ENCODE measurements at regions of chr17 and their contacts with region 1.

Region 1: GRCh38 chr17:67376737-67377487 is at the start of gene PITPNC1:
- DNase-seq: peak; percentile 77
- ATAC-seq: peak; percentile 74
- H3K4me3 Mint-ChIP-seq: peak within 1 kb of the TSS; percentile 87
- H3K27ac Mint-ChIP-seq: peak within 1 kb of the TSS; percentile 71
- H3K4me1 Mint-ChIP-seq: peaks cover 26% of the 10 kb centered on the region
- H3K27me3 Mint-ChIP-seq: no peaks in the 10 kb centered on the region
- CTCF ChIP-seq: no peak
- total RNA-seq, gene PITPNC1: 15.2 and 19.3 TPM in 2 replicates

Region 2: DNA sequence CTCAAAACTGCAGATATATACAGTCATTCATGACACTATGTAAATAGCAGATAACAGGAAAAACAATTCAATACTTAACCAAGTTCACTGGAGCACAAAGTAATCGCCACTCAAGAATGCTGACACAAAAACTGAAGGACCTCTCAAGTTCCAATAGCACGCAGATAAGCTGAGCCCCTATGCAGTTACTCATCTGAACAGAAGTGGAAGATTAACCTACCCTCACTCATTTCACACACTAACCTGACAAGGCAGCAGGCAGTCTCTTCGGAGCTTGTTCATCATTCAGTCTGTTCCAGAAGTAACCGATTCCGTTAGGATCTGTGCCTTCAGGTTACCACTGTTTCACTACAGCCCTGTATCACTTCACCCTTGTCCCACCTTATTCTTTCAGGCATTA is 137.9 kb before region 1 on chr17:
- CTCF ChIA-PET with region 1: no interaction called
- POLR2A ChIA-PET with region 1: no interaction called
- intact Hi-C with region 1: no loop called
- DNase-seq: no peak
- ATAC-seq: no peak
- H3K4me3 Mint-ChIP-seq: no peak overlapping the region
- H3K27ac Mint-ChIP-seq: no peak overlapping the region
- H3K4me1 Mint-ChIP-seq: peaks cover 32% of the 10 kb centered on the region
- H3K27me3 Mint-ChIP-seq: no peaks in the 10 kb centered on the region
- CTCF ChIP-seq: no peak

Region 3: DNA sequence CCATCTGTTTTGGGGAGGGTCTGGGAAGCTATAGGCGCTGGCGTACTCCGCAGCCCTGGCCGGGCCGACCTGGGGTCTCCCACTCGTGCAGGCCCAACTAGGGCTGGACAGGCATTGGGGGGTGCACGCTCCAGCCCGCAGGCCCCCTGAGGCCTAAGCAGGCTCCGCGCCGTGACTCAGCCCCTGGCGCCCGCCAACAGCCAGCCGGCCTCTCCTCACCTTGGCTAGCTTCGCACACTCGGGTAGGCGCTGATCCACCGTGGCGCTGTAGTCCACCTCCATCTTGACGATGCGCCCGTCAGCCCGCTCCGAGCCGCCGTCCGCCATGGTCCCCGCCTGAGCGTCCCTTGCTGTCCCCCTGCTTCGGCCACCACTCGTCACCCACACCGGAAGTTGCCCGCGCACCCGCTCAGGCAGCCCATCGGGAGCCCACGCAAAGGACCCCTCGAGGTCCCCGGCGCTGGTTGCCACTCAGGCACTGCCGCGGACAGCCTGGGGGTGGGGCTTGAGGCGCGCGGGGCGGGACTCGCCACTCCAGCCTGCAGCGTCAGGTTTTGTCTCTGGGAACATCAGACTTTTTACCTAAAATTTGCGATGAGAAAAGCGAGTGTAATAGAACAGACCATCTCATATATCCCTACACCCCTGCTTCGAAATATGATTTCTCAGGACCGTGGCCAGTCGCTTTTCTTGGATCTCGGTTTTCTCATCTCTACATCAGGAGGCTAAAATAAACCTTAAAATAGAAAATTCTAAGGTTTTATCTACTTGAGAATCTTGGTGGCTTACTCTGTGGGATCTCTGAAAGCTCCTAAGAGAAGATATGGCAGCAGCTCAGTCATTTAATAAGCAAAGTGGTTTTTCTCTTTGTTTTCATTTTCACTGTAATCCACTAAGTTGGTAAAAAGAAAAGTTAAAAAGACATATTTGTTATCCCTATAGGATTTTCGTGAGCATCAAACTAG is 10.4 kb before region 1 on chr17 and contains the start of gene PSMD12:
- CTCF ChIA-PET with region 1: interaction called, 43 read pairs
- POLR2A ChIA-PET with region 1: interaction called, 22 read pairs
- intact Hi-C with region 1: loop called (anchors 1 kb)
- DNase-seq: peak; percentile 94
- ATAC-seq: peak; percentile 98
- H3K4me3 Mint-ChIP-seq: peak within 1 kb of the TSS; percentile 91
- H3K27ac Mint-ChIP-seq: peak within 1 kb of the TSS; percentile 87
- H3K4me1 Mint-ChIP-seq: peaks cover 40% of the 10 kb centered on the region
- H3K27me3 Mint-ChIP-seq: no peaks in the 10 kb centered on the region
- CTCF ChIP-seq: no peak
- total RNA-seq, gene PSMD12: 47.3 and 54.6 TPM in 2 replicates

Region 4: GRCh38 chr17:67575325-67575724 is 198.4 kb after region 1 on chr17:
- CTCF ChIA-PET with region 1: interaction called, 4 read pairs
- POLR2A ChIA-PET with region 1: interaction called, 6 read pairs
- intact Hi-C with region 1: loop called (anchors 1 kb)
- DNase-seq: no peak
- ATAC-seq: peak; percentile 23
- H3K4me3 Mint-ChIP-seq: peak overlapping the region; percentile 64
- H3K27ac Mint-ChIP-seq: peak overlapping the region; percentile 80
- H3K4me1 Mint-ChIP-seq: peaks cover 73% of the 10 kb centered on the region
- H3K27me3 Mint-ChIP-seq: no peaks in the 10 kb centered on the region
- CTCF ChIP-seq: no peak

Region 5: GRCh38 chr17:67689534-67690177 is 312.7 kb after region 1 on chr17:
- CTCF ChIA-PET with region 1: interaction called, 19 read pairs
- POLR2A ChIA-PET with region 1: interaction called, 9 read pairs
- intact Hi-C with region 1: loop called (anchors 1 kb)
- DNase-seq: no peak
- ATAC-seq: peak; percentile 68
- H3K4me3 Mint-ChIP-seq: no peak overlapping the region
- H3K27ac Mint-ChIP-seq: no peak overlapping the region
- H3K4me1 Mint-ChIP-seq: peaks cover 4% of the 10 kb centered on the region
- H3K27me3 Mint-ChIP-seq: no peaks in the 10 kb centered on the region
- CTCF ChIP-seq: no peak